ENCODE measurements at regions of chr2 and their contacts with region 1.

Region 1: GRCh38 chr2:73071360-73072133 is at the start of gene SFXN5:
- DNase-seq: peak; percentile 95 to 100 (median 99)

Region 2: GRCh38 chr2:72993147-72993932 is 78.2 kb before region 1 on chr2:
- intact Hi-C with region 1: loop called (anchors 10 kb)
- DNase-seq: peak in 20 of 42 donors; percentile 17 to 79 (median 43)

Region 3: GRCh38 chr2:73107211-73107926 is 35.8 kb after region 1 on chr2:
- intact Hi-C with region 1: no loop called
- DNase-seq: peak in 4 of 42 donors; percentile 8 to 36 (median 20)

Region 4: DNA sequence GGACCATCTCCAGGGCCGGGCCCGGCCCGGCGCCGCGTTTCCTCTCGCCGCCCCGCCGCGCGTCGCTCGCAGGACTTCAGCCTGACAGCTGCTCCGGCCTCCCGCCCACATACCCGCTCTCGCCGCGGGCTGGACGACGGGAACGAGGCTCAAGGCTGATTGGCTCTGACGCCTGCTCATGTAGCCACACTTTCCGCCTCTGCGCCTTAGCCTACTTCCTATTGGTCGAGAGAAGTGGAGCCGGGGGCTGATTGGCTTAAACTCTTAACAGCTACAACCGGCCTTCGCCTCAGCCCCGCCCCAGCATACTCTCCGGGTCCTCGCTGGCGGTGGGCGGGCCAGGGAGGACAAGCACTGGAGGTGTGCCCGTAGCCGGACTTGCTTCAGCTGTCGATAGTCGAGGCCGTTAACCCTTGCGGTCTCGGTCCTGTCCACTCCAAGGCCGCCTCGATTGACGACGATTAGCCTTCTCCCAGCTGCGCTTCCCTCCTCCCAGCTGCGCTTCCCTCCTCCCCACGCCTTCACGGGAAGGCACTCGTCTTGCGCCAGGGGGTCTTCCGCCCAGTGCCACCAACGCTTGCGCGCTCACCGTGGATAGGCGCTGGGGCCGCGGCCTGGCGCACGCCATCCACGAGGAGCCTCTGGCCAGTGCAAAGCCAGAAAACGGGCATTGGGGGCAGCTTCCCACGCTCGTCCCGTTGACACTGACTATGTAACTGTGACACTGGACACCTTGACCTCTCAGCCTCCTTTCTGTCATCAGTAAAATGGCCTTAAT is 161.8 kb after region 1 on chr2 and contains the start of gene PRADC1:
- intact Hi-C with region 1: loop called (anchors 10 kb)
- DNase-seq: peak; percentile 98 to 100 (median 99)